ENCODE measurements at regions of chr6 and their contacts with region 1.

Region 1: DNA sequence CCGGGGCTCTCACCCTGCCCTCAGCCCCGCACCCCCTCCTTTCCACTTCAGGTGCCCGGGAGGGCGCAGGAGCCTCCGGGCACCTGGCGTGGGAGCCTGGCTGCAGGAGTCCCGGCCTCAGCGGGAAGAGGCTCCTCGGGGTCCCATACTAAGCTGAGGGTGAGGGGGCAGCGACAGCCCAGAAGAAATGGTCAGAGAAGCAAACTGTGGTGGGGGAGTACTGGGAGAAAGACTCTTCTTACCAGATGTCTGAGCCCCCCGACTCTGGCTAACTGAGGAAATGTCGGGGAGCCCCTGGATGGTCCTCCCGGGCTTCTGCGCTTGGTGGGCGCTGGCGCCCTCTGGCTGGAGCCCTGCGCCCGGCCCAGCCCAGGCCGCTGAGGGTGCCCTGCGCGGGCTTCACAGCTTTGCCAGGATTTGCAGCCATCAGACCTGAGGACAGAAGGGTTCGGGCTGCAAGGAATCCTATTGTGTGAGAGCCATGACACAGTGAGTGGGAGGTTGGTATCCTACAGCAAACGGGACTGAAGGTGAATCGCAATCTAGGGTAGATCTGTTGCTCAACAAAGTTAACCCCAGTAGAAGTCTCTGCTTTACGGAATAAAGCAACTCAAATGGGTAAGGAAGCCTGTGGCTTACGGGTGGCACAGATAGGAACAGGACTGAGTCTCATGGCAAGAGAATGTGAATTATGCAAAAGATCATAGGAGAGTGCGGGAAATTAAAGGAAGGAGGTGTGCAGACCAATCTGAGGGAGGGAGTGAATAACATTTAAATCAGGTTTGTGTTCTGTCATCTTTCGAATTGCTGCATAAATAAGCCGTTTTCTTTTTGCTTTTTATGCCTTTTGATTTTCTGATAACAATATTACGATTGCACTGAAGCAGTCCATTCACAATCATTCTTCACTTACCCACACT is 639 bp upstream of the RCAN2 start:
- DNase-seq: peak; percentile 13
- ATAC-seq: peak; percentile 71
- H3K4me3 ChIP-seq: peak overlapping the region; percentile 66
- H3K27ac ChIP-seq: no peak overlapping the region
- H3K4me1 ChIP-seq: peaks cover 12% of the 10 kb centered on the region; the same call in 1 of the 2 replicates
- H3K27me3 ChIP-seq: peaks cover 86% of the 10 kb centered on the region
- CTCF ChIP-seq: peak; percentile 51; the same call in 1 of the 2 replicates

Region 2: GRCh38 chr6:45959534-45960145 is 532.2 kb before region 1 on chr6:
- CTCF ChIA-PET with region 1: no interaction called
- POLR2A ChIA-PET with region 1: no interaction called
- intact Hi-C with region 1: no loop called
- DNase-seq: peak; percentile 71
- ATAC-seq: no peak
- H3K4me3 ChIP-seq: no peak overlapping the region
- H3K27ac ChIP-seq: no peak overlapping the region
- H3K4me1 ChIP-seq: no peaks in the 10 kb centered on the region
- H3K27me3 ChIP-seq: peaks cover 31% of the 10 kb centered on the region; the same call in 1 of the 2 replicates
- CTCF ChIP-seq: no peak

Region 3: GRCh38 chr6:46233131-46233530 is 258.8 kb before region 1 on chr6:
- CTCF ChIA-PET with region 1: no interaction called
- POLR2A ChIA-PET with region 1: no interaction called
- intact Hi-C with region 1: no loop called
- DNase-seq: no peak
- ATAC-seq: no peak
- H3K4me3 ChIP-seq: no peak overlapping the region
- H3K27ac ChIP-seq: no peak overlapping the region
- H3K4me1 ChIP-seq: no peaks in the 10 kb centered on the region
- H3K27me3 ChIP-seq: peaks cover 40% of the 10 kb centered on the region
- CTCF ChIP-seq: no peak

Region 4: GRCh38 chr6:46626228-46626909 is 134.5 kb after region 1 on chr6:
- CTCF ChIA-PET with region 1: no interaction called
- POLR2A ChIA-PET with region 1: no interaction called
- intact Hi-C with region 1: loop called (anchors 5 kb)
- DNase-seq: peak; percentile 73
- ATAC-seq: peak; percentile 67
- H3K4me3 ChIP-seq: no peak overlapping the region
- H3K27ac ChIP-seq: no peak overlapping the region
- H3K4me1 ChIP-seq: no peaks in the 10 kb centered on the region
- H3K27me3 ChIP-seq: no peaks in the 10 kb centered on the region
- CTCF ChIP-seq: peak; percentile 83